ENCODE measurements at regions of chr11 and their contacts with region 1.

Region 1: DNA sequence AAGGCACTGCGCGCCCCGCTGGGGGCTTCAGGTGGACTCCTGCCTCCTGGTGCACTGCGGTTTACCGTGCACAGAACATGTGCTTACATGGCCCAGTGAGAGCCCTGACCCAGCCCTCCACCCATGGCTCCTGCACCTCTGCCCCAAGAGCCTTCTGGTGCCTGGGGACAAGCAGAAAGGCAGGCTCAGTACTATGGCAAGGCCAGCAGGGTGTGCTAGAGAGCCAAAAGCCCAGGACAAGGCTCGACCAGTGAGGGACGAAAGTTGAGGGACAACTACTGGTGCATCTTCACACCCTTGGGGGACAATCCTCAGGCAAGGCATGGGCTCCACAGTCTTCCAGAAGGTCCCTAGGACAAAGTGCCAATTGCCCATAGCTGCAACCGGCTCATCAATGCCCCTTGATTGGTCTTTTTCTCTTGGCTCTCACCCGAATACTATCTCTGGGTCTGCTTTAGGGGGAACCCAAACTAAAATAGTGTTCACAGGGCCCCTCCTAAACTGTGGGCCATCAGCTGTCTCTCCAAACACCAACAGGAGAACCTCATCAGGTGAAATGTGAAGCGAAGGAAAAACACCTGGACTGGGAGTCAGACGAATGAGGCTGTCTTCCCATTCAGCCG is 13.5 kb downstream of the PGA5 start:
- DNase-seq: peak; percentile 56 to 73 (median 62)
- H3K4me3 ChIP-seq: no peak overlapping the region
- H3K27ac ChIP-seq: no peak overlapping the region
- H3K4me1 ChIP-seq: peaks cover 0 to 2% (median 0%) of the 10 kb centered on the region in 4 experiments
- H3K27me3 ChIP-seq: no peaks in the 10 kb centered on the region

Region 2: GRCh38 chr11:61264795-61265194 is 10.3 kb after region 1 on chr11:
- CTCF ChIA-PET with region 1: interaction called, 12 read pairs
- POLR2A ChIA-PET with region 1: no interaction called
- DNase-seq: no peak
- H3K4me3 ChIP-seq: no peak overlapping the region
- H3K27ac ChIP-seq: no peak overlapping the region
- H3K4me1 ChIP-seq: no peaks in the 10 kb centered on the region
- H3K27me3 ChIP-seq: no peaks in the 10 kb centered on the region

Region 3: GRCh38 chr11:61294717-61295595 is 40.4 kb after region 1 on chr11 and contains the start of gene VWCE:
- CTCF ChIA-PET with region 1: interaction called, 30 read pairs
- POLR2A ChIA-PET with region 1: no interaction called
- DNase-seq: peak; percentile 75 to 91 (median 84)
- H3K4me3 ChIP-seq: peak within 1 kb of the TSS; percentile 19 to 80 (median 72)
- H3K27ac ChIP-seq: no peak within 1 kb of the TSS
- H3K4me1 ChIP-seq: peaks cover 4 to 50% (median 38%) of the 10 kb centered on the region in 4 experiments
- H3K27me3 ChIP-seq: no peaks in the 10 kb centered on the region

Region 4: GRCh38 chr11:61752117-61752924 is 497.8 kb after region 1 on chr11 and contains the start of gene MYRF:
- CTCF ChIA-PET with region 1: no interaction called
- POLR2A ChIA-PET with region 1: no interaction called
- DNase-seq: peak in 2 of 3 donors; percentile 60 to 63
- H3K4me3 ChIP-seq: peak within 1 kb of the TSS in 6 of 7 experiments; percentile 19 to 69 (median 26)
- H3K27ac ChIP-seq: no peak within 1 kb of the TSS
- H3K4me1 ChIP-seq: peaks cover 0 to 27% (median 16%) of the 10 kb centered on the region in 4 experiments
- H3K27me3 ChIP-seq: peaks cover 0 to 27% (median 6%) of the 10 kb centered on the region in 5 experiments

Measured in common myeloid progenitor, CD34-positive (primary cell).